Upper lobe of right lung (tissue), 1 donor: ENCODE measurements at regions of chr19 and their contacts with region 1.

Region 1: GRCh38 chr19:13597640-13598039 is 91.4 kb upstream of the CACNA1A start:
- DNase-seq: no peak
- ATAC-seq: peak; percentile 89
- H3K4me3 ChIP-seq: no peak overlapping the region
- H3K27ac ChIP-seq: no peak overlapping the region
- H3K4me1 ChIP-seq: no peaks in the 10 kb centered on the region
- H3K27me3 ChIP-seq: peaks cover 7% of the 10 kb centered on the region
- CTCF ChIP-seq: peak; percentile 61

Region 2: GRCh38 chr19:13718733-13719132 is 121.1 kb after region 1 on chr19:
- intact Hi-C with region 1: loop called (anchors 10 kb)
- DNase-seq: no peak
- ATAC-seq: no peak
- H3K4me3 ChIP-seq: no peak overlapping the region
- H3K27ac ChIP-seq: no peak overlapping the region
- H3K4me1 ChIP-seq: no peaks in the 10 kb centered on the region
- H3K27me3 ChIP-seq: no peaks in the 10 kb centered on the region
- CTCF ChIP-seq: peak; percentile 12